PC-9 (cell line): ENCODE measurements at regions of chr10 and their contacts with region 1.

Region 1: GRCh38 chr10:71696628-71697326 is 22.8 kb downstream of the C10orf105 start:
- DNase-seq: peak in 1 of 2 experiments; percentile 68
- H3K4me3 ChIP-seq: no peak overlapping the region
- H3K27ac ChIP-seq: no peak overlapping the region
- H3K4me1 ChIP-seq: peaks cover 27% of the 10 kb centered on the region
- H3K27me3 ChIP-seq: no peaks in the 10 kb centered on the region
- CTCF ChIP-seq: peak; percentile 98

Region 2: GRCh38 chr10:71623098-71623985 is 73.4 kb before region 1 on chr10:
- CTCF ChIA-PET with region 1: no interaction called
- POLR2A ChIA-PET with region 1: no interaction called
- intact Hi-C with region 1: loop called (anchors 5 kb)
- DNase-seq: peak in 1 of 2 experiments; percentile 34
- H3K4me3 ChIP-seq: no peak overlapping the region
- H3K27ac ChIP-seq: no peak overlapping the region
- H3K4me1 ChIP-seq: peaks cover 31% of the 10 kb centered on the region
- H3K27me3 ChIP-seq: no peaks in the 10 kb centered on the region
- CTCF ChIP-seq: peak; percentile 45; the same call in 1 of the 2 replicates

Region 3: GRCh38 chr10:71675295-71675970 is 21.3 kb before region 1 on chr10:
- CTCF ChIA-PET with region 1: interaction called, 10 read pairs
- POLR2A ChIA-PET with region 1: interaction called, 4 read pairs
- intact Hi-C with region 1: no loop called
- DNase-seq: no peak
- H3K4me3 ChIP-seq: no peak overlapping the region
- H3K27ac ChIP-seq: no peak overlapping the region
- H3K4me1 ChIP-seq: no peaks in the 10 kb centered on the region
- H3K27me3 ChIP-seq: no peaks in the 10 kb centered on the region
- CTCF ChIP-seq: no peak

Region 4: DNA sequence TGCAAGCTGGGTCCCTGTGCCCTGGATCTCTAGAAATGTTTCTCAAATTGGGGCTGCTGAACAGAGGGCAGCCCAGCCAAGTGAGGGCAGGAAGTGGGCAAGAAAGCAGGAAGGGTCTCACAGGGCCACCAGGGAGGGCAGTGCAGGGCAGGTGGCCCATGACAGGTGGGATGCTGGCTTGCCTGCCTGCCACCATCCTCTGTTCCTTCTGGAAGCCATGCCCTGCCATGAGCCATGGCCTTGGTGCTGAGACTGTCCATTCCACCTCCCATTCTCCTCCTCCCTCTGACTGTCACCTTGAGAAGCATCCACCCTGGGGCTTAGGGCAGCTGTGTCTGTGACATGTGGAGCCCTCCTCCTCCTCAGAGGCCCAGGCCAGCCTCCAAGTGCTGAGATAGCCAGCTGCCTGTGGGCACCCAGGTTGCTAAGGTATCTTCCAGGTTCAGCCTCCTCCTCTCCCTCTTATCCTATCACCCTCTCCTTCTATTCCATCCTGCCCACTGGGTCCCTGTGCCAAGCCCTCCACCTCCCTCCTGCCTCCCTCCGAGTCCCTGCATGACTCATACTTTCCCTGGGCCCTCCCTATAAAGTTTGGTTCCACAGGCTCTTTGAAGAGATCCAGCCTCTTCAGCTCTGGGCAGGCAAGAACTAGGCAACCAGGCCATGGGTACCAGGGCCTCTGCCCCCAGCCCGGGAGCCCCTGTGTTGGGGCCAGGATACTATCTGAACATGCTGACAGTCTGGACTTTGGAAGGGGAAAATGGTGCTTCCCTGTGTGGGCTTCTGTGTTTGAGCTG is 75.2 kb after region 1 on chr10:
- CTCF ChIA-PET with region 1: interaction called, 6 read pairs
- POLR2A ChIA-PET with region 1: no interaction called
- intact Hi-C with region 1: loop called (anchors 2 kb)
- DNase-seq: peak; percentile 76 to 79
- H3K4me3 ChIP-seq: peak overlapping the region; percentile 81
- H3K27ac ChIP-seq: 0 out of 2 replicates have a peak overlapping the region, but pooled peaks have one; percentile 53
- H3K4me1 ChIP-seq: peaks cover 74% of the 10 kb centered on the region
- H3K27me3 ChIP-seq: no peaks in the 10 kb centered on the region
- CTCF ChIP-seq: no peak

Region 5: GRCh38 chr10:72133517-72133916 is 436.7 kb after region 1 on chr10:
- CTCF ChIA-PET with region 1: no interaction called
- POLR2A ChIA-PET with region 1: no interaction called
- intact Hi-C with region 1: no loop called
- DNase-seq: peak in 1 of 2 experiments; percentile 39
- H3K4me3 ChIP-seq: no peak overlapping the region
- H3K27ac ChIP-seq: no peak overlapping the region
- H3K4me1 ChIP-seq: peaks cover 16% of the 10 kb centered on the region; the same call in 1 of the 2 replicates
- H3K27me3 ChIP-seq: no peaks in the 10 kb centered on the region
- CTCF ChIP-seq: no peak